WTC11 (cell line): ENCODE measurements at regions of chr1 and their contacts with region 1.

Region 1: GRCh38 chr1:18913065-18913835 is 10.9 kb upstream of the ALDH4A1 start:
- DNase-seq: peak; percentile 94
- ATAC-seq: peak; percentile 95
- H3K4me3 Mint-ChIP-seq: no peak overlapping the region
- H3K27ac Mint-ChIP-seq: no peak overlapping the region
- H3K4me1 Mint-ChIP-seq: peaks cover 5% of the 10 kb centered on the region
- H3K27me3 Mint-ChIP-seq: no peaks in the 10 kb centered on the region
- CTCF ChIP-seq: peak; percentile 94

Region 2: DNA sequence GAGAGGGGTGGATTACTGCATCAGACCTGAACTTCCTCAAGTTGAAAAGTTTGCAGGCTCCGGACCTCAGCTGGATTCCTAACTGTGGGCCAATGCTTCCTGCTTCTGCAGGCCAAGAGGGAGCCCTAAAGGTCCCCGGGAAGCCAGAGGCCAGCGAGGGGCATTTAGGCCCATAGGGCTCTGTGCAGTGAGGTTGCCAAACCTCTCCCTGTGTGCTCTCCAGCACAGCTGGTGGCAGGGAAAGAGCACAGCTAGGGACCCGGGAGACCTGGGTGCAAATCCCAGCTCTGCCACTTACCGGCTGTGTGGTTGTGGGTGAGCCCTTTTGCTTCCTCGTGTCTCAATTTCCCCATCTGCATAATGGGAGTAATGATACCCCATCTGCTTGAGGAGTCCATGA is 182.1 kb before region 1 on chr1:
- CTCF ChIA-PET with region 1: interaction called, 12 read pairs
- POLR2A ChIA-PET with region 1: no interaction called
- DNase-seq: no peak
- ATAC-seq: no peak
- H3K4me3 Mint-ChIP-seq: no peak overlapping the region
- H3K27ac Mint-ChIP-seq: no peak overlapping the region
- H3K4me1 Mint-ChIP-seq: 0 out of 2 replicates have a peak, but pooled peaks cover 2% of the 10 kb centered on the region
- H3K27me3 Mint-ChIP-seq: peaks cover 5% of the 10 kb centered on the region; the same call in 1 of the 2 replicates
- CTCF ChIP-seq: no peak

Region 3: GRCh38 chr1:18926315-18927081 is 13.2 kb after region 1 on chr1:
- CTCF ChIA-PET with region 1: interaction called, 71 read pairs
- POLR2A ChIA-PET with region 1: no interaction called
- DNase-seq: no peak
- ATAC-seq: no peak
- H3K4me3 Mint-ChIP-seq: no peak overlapping the region
- H3K27ac Mint-ChIP-seq: no peak overlapping the region
- H3K4me1 Mint-ChIP-seq: peaks cover 27% of the 10 kb centered on the region
- H3K27me3 Mint-ChIP-seq: no peaks in the 10 kb centered on the region
- CTCF ChIP-seq: no peak

Region 4: DNA sequence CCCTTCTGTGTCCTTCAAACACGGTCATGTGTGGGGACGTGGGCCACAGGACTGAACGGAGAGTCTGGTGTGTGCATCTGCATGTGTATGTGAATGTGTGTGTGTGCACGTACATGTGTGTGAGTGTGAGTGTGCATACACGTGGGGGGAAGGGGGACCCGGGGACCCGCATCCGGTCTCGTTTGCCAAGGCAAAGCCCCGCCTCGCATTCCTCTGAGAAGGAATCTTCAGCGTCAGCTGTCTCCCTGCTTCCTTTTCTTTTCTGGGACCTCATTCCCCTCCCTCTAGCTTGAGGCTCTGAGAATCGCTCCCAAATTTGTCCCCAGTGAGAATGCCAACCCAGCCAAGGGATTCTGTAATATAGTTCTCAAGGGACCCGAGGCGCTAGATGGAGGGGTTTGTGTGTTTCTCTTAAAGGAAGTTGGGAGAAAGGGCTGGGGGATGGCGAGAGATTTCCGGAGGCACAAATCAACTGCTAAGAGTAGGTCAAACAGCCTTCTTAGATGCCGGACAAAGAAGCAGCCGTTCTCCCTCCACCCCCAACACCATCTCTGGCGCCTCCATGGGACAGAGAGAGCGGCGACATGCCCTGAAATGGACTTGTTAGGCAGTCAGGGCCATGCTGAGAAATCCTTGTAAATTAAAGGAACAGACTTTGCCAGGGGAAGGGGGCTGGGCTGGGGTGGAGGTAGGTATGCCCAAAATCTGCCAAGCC is 36.6 kb after region 1 on chr1:
- CTCF ChIA-PET with region 1: interaction called, 107 read pairs
- POLR2A ChIA-PET with region 1: no interaction called
- DNase-seq: peak; percentile 46
- ATAC-seq: peak; percentile 59
- H3K4me3 Mint-ChIP-seq: no peak overlapping the region
- H3K27ac Mint-ChIP-seq: peak overlapping the region; percentile 90
- H3K4me1 Mint-ChIP-seq: peaks cover 39% of the 10 kb centered on the region
- H3K27me3 Mint-ChIP-seq: peaks cover 11% of the 10 kb centered on the region
- CTCF ChIP-seq: no peak

Region 5: DNA sequence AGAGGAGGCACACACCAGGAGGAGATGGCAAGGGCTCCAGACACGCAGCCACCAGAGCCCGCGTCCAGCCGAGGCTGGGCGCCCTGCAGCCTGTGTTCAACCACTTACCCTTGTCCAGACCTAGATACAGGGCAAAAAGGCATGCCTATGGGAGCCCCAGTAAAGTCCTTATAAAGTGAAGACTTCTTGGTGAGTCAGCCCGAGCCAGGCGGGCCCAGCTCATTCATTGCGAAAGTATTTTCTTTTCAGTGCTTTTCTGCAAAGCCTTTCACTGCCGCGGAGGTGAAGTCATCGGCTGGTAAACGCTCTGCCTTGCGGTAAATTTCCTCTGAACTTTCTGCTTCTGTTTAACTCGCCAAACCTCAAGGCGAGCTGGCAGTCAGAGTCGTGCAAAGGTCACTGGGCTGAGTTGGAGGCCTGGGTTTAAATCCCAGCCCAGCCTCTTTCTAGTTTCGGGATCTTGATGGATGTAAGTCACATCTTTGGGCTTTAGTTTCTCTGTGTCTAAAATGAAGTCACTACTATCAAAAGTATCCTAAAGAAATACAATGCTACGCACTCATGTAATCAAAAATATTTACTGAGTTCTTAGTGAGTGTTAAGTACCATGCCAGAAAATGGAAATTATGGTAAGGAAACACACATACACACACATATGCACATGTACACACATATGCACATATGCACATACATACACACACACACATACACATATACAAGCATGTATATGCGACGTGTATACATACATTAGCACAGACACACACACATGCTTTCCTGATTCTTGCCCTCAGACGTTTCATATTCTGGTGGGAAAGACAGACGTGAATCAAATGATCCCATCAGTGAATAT is 98.0 kb after region 1 on chr1:
- CTCF ChIA-PET with region 1: interaction called, 34 read pairs
- POLR2A ChIA-PET with region 1: no interaction called
- DNase-seq: no peak
- ATAC-seq: no peak
- H3K4me3 Mint-ChIP-seq: no peak overlapping the region
- H3K27ac Mint-ChIP-seq: no peak overlapping the region
- H3K4me1 Mint-ChIP-seq: peaks cover 36% of the 10 kb centered on the region
- H3K27me3 Mint-ChIP-seq: no peaks in the 10 kb centered on the region; the same call in 1 of the 2 replicates
- CTCF ChIP-seq: no peak

Region 6: DNA sequence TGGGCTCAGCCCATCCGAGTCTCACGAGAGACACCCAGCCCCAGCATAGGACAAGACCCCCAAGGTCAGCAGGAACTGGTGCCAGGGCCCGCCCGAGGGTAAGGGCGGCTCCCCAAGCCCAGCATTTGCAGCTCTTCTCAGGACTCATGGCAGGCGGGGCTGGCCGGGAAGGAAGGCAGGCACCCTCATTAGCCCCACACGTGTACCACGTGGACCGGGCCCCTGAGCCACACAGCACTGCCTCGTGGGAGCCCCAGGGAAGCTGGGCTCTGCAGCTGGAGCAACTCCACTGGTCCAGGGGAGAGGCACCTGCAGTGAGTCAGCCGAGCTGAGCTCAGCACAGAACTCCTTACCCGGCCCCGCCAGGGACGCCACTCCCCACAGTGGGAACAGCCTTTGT is 141.0 kb after region 1 on chr1:
- CTCF ChIA-PET with region 1: interaction called, 24 read pairs
- POLR2A ChIA-PET with region 1: no interaction called
- DNase-seq: no peak
- ATAC-seq: no peak
- H3K4me3 Mint-ChIP-seq: no peak overlapping the region
- H3K27ac Mint-ChIP-seq: no peak overlapping the region
- H3K4me1 Mint-ChIP-seq: 0 out of 2 replicates have a peak, but pooled peaks cover 12% of the 10 kb centered on the region
- H3K27me3 Mint-ChIP-seq: no peaks in the 10 kb centered on the region
- CTCF ChIP-seq: no peak